PC-9 (cell line): ENCODE measurements at regions of chr11 and their contacts with region 1.

Region 1: DNA sequence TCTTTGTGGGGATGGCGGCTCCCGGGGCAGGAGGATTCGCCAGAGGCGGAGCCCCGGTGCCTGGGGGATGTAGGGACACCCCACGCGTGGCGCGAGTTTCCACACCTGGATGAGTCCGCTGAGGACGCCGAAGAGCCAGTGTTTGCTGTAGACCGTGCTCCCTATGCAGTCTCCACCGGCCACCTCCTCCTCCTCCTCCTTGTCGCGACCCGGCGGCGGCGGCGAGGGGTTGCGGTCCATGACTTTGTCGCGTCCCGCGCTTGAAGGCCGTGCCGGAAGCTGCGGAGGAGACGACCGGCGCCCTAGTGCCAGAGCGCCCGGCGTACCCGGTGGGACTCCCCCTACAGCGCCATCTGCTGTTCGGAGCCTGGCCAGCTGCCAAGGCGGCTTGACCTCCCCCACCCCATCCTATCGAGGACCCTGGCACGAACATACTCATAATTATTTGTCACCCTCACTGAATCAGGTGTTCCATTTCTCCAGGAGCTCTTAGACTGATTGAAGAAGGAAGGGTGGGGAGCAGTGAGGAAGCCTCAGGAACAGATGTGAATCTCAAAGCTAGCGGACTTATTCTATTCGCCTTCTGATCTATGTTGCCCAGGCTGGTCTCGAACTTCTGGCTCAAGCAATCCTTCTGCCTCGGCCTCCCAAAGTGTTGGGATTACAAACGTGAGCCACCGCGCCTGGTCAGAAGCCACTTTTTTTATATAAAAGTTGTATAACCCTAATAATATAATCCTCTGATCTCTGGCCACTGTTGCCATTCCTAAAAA is at the start of gene SAAL1:
- DNase-seq: peak; percentile 73 to 85
- H3K4me3 ChIP-seq: peak within 1 kb of the TSS; percentile 92
- H3K27ac ChIP-seq: no peak within 1 kb of the TSS
- H3K4me1 ChIP-seq: peaks cover 12% of the 10 kb centered on the region
- H3K27me3 ChIP-seq: peaks cover 16% of the 10 kb centered on the region
- CTCF ChIP-seq: peak; percentile 84
- total RNA-seq, gene SAAL1: 23.5 and 32.1 TPM in 2 replicates

Region 2: DNA sequence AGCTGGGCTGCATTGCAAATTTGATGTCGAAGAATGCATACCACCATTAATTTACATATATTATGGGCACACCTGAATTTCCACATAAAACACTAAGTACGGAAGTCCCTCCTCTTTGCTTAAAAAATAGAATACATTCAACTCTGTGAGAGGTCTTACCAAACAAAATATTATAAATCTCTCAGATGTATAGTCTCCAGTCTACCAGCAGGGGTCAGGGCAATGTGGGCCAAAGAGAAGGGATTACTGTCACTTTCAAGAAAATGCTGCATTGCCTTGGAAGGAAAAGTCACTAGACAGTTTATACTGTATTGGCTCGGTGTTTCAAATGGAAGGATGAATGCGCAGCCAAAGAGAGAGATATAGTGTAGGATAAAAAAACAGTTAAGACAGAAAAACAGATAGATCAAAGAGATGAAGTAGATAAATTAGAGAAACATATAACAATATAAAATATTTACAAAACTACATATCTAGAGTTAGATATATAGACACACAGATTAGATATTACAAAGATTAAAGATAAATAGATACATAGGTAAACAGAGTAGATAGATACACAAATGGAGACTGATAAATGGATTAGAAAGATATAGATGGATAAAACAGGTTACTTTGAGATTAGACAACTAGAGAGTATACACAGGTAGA is 114.1 kb before region 1 on chr11:
- CTCF ChIA-PET with region 1: interaction called, 6 read pairs
- POLR2A ChIA-PET with region 1: no interaction called
- intact Hi-C with region 1: loop called (anchors 5 kb)
- DNase-seq: peak; percentile 21 to 54
- H3K4me3 ChIP-seq: no peak overlapping the region
- H3K27ac ChIP-seq: no peak overlapping the region
- H3K4me1 ChIP-seq: no peaks in the 10 kb centered on the region
- H3K27me3 ChIP-seq: no peaks in the 10 kb centered on the region
- CTCF ChIP-seq: peak; percentile 95

Region 3: DNA sequence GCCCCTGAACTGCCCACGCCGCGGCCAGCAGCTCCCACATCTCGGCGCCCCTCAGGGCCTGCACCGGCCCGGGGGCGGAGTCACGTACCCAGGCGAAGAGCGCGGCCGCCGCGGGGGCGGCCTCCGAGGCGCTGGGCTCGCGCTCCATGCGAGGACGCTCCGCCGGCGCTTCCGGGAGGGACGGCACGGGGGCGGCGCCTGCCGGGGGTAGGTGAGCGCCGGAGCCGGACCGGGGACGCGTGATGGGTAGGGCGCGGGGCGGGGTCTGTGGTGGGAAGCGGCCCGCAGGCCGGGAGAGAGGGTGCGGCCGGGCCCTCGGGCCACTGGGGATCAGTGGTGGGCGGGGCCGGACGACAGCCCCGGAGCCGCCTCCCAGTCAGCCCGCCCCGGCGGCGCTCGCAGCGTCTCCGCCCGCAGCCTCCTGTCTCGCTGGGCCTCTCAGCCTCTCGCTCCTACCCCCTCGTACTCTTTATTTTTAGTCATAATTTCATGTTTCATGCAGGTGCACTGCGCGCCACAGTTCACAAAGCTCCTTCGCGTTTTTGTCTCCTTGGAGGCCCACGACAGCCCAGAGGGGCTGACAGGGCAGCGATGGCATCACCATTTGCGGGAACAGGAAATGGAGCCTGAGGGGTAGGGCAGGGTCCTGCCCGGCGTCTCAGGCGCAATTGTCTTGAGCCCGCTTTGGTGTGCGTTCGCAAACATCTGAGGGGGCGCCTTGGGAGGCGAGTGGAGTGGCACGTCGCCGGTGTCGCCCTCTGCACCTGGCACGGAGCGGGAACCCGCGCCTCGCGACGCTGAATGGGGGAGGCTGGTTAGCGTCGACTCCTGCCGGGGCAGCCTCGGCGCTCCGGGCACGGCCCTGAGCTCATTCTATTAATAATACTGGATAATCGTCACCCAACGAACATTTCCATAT is 92.9 kb before region 1 on chr11 and contains the start of gene SERGEF:
- CTCF ChIA-PET with region 1: interaction called, 4 read pairs
- POLR2A ChIA-PET with region 1: interaction called, 3 read pairs
- intact Hi-C with region 1: loop called (anchors 5 kb)
- DNase-seq: peak; percentile 83 to 98
- H3K4me3 ChIP-seq: peak within 1 kb of the TSS; percentile 69
- H3K27ac ChIP-seq: no peak within 1 kb of the TSS
- H3K4me1 ChIP-seq: peaks cover 5% of the 10 kb centered on the region
- H3K27me3 ChIP-seq: no peaks in the 10 kb centered on the region
- CTCF ChIP-seq: 0 out of 2 replicates have a peak, but pooled peaks have one; percentile 11
- total RNA-seq, gene SERGEF: 28.7 and 34.1 TPM in 2 replicates